ENCODE measurements at regions of chr4 and their contacts with region 1.

Region 1: GRCh38 chr4:128403586-128403985 is 116.0 kb upstream of the PGRMC2 start:
- DNase-seq: no peak
- H3K4me3 ChIP-seq: no peak overlapping the region
- CTCF ChIP-seq: no peak
- POLR2A ChIP-seq: no peak

Region 2: GRCh38 chr4:128349921-128350320 is 53.7 kb before region 1 on chr4:
- intact Hi-C with region 1: no loop called
- DNase-seq: no peak
- H3K4me3 ChIP-seq: no peak overlapping the region
- CTCF ChIP-seq: no peak
- POLR2A ChIP-seq: no peak

Region 3: GRCh38 chr4:128444544-128445302 is 41.1 kb after region 1 on chr4:
- intact Hi-C with region 1: loop called (anchors 5 kb)
- DNase-seq: no peak
- H3K4me3 ChIP-seq: no peak overlapping the region
- CTCF ChIP-seq: no peak
- POLR2A ChIP-seq: no peak